Dendritic cell treated with granulocyte-macrophage colony-stimulating factor and Interleukin-4, amounts not matched to agents 40 ng/mL and 50 ng/mL, for 4 days (primary cell): ENCODE measurements at regions of chr19 and their contacts with region 1.

Region 1: GRCh38 chr19:45178262-45179071 is at the start of gene BLOC1S3:
- H3K4me3 Mint-ChIP-seq: peak within 1 kb of the TSS; percentile 78
- H3K27ac Mint-ChIP-seq: peak within 1 kb of the TSS; percentile 89
- H3K4me1 Mint-ChIP-seq: peaks cover 43% of the 10 kb centered on the region
- H3K27me3 Mint-ChIP-seq: no peaks in the 10 kb centered on the region

Region 2: GRCh38 chr19:45001087-45001739 is 177.3 kb before region 1 on chr19 and contains the start of gene RELB:
- intact Hi-C with region 1: loop called (anchors 5 kb)
- H3K4me3 Mint-ChIP-seq: peak within 1 kb of the TSS; percentile 93
- H3K27ac Mint-ChIP-seq: peak within 1 kb of the TSS; percentile 100
- H3K4me1 Mint-ChIP-seq: peaks cover 19% of the 10 kb centered on the region
- H3K27me3 Mint-ChIP-seq: peaks cover 4% of the 10 kb centered on the region

Region 3: GRCh38 chr19:45245334-45245787 is 66.9 kb after region 1 on chr19 and contains the start of gene EXOC3L2:
- intact Hi-C with region 1: loop called (anchors 10 kb)
- H3K4me3 Mint-ChIP-seq: no peak within 1 kb of the TSS
- H3K27ac Mint-ChIP-seq: no peak within 1 kb of the TSS
- H3K4me1 Mint-ChIP-seq: peaks cover 6% of the 10 kb centered on the region
- H3K27me3 Mint-ChIP-seq: peaks cover 30% of the 10 kb centered on the region